ENCODE measurements at regions of chr1 and their contacts with region 1.

Region 1: DNA sequence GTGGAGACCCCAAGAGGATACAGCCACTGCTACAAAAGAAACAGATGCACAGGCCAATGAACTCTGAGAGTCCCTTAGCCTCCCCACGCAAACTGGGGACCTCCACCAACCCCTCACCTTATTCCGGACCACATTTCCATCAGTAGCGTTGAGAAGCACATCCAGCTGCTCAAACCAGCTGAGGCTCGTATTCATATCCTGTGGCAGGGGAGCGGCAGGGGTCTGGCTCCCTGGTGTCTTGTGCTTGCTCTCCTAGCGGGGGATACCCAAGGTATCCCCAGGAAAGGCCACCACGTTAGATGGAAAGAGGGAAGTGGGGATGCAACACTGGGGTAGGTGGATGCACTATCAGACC is 481 bp downstream of the CCDC163 start:
- DNase-seq: no peak
- H3K4me3 ChIP-seq: peak overlapping the region; percentile 87
- H3K27ac ChIP-seq: no peak overlapping the region
- H3K27me3 ChIP-seq: no peaks in the 10 kb centered on the region
- CTCF ChIP-seq: no peak

Region 2: GRCh38 chr1:45339789-45340570 is 159.4 kb before region 1 on chr1 and contains the starts of genes MUTYH and TOE1:
- CTCF ChIA-PET with region 1: interaction called, 6 read pairs
- POLR2A ChIA-PET with region 1: interaction called, 16 read pairs
- DNase-seq: peak; percentile 70
- H3K4me3 ChIP-seq: peak within 1 kb of the TSS; percentile 73
- H3K27ac ChIP-seq: peak within 1 kb of the TSS; percentile 94
- H3K27me3 ChIP-seq: no peaks in the 10 kb centered on the region
- CTCF ChIP-seq: peak; percentile 11; the same call in 1 of the 2 replicates
- polyA plus RNA-seq, gene MUTYH: 5.8 and 6.2 TPM in 2 replicates
- polyA plus RNA-seq, gene TOE1: 8.1 and 10.1 TPM in 2 replicates

Region 3: GRCh38 chr1:45512641-45513054 is 13.3 kb after region 1 on chr1:
- CTCF ChIA-PET with region 1: interaction called, 16 read pairs
- POLR2A ChIA-PET with region 1: interaction called, 6 read pairs
- DNase-seq: no peak
- H3K4me3 ChIP-seq: no peak overlapping the region
- H3K27ac ChIP-seq: peak overlapping the region; percentile 3
- H3K27me3 ChIP-seq: no peaks in the 10 kb centered on the region
- CTCF ChIP-seq: peak; percentile 72

Region 4: GRCh38 chr1:45530632-45531135 is 31.3 kb after region 1 on chr1:
- CTCF ChIA-PET with region 1: no interaction called
- POLR2A ChIA-PET with region 1: no interaction called
- DNase-seq: no peak
- H3K4me3 ChIP-seq: no peak overlapping the region
- H3K27ac ChIP-seq: no peak overlapping the region
- H3K27me3 ChIP-seq: no peaks in the 10 kb centered on the region
- CTCF ChIP-seq: no peak

Region 5: DNA sequence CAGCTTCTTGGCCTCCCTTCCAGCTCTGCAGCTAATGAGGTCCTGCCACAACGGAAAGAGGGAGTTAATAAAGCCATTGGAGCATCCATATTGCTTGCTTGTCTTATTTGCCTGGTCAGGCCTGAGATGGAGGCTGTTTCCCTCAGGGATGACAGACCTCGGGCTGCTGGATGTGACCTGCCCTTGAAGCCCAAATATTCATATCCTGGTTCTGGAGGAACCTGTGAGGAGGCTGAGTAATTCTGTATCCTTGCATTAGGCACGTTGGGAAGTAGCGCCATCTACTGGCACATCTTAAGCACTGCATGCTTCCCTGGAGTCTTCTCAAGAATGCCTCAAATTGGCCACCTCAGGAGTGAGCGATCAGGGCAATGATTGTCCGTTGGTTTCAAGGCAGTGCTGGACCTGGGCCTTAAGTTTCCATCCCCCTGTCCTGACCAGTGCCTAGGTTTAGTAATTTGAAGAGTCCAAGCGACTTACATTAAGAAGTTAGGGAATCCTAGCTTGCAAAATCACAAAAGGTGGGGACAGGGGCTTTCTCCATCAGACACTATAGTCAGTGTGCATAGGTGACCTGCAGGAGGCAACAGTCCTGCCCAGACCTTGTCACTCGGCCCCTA is 70.7 kb after region 1 on chr1:
- CTCF ChIA-PET with region 1: interaction called, 10 read pairs
- POLR2A ChIA-PET with region 1: interaction called, 5 read pairs
- DNase-seq: peak; percentile 58
- H3K4me3 ChIP-seq: no peak overlapping the region
- H3K27ac ChIP-seq: no peak overlapping the region
- H3K27me3 ChIP-seq: no peaks in the 10 kb centered on the region
- CTCF ChIP-seq: peak; percentile 99

Region 6: DNA sequence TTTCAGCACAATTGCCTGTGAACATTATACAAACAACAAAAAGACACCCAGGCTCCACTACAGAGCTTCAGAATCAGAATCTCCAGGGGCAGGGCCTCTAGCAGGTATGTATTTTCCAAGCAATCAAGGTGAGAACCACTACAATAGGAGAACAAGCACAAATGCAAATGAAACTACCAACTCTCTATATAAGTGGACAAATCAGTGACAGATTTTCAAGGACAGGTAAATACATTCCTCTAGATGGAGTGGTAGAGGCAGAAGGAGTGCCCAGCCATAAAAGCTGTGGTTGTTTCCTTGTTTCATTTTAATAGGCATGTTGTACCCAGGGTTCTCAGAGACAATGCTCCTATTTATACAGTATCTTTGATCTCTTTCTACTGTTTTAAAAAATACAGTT is 144.6 kb after region 1 on chr1:
- CTCF ChIA-PET with region 1: no interaction called
- POLR2A ChIA-PET with region 1: no interaction called
- DNase-seq: no peak
- H3K4me3 ChIP-seq: no peak overlapping the region
- H3K27ac ChIP-seq: no peak overlapping the region
- H3K27me3 ChIP-seq: no peaks in the 10 kb centered on the region
- CTCF ChIP-seq: no peak

Measured in AG04450 (cell line).